Naive thymus-derived CD4-positive, alpha-beta T cell (primary cell): ENCODE measurements at regions of chr7 and their contacts with region 1.

Region 1: GRCh38 chr7:66844552-66845378 is 76.3 kb upstream of the TMEM248 start:
- DNase-seq: peak; percentile 96 to 100 (median 100)
- ATAC-seq: peak; percentile 95
- H3K4me3 ChIP-seq: peak overlapping the region; percentile 99
- H3K4me3 Mint-ChIP-seq: peak overlapping the region; percentile 88 to 100 (median 96)
- H3K27ac ChIP-seq: peak overlapping the region; percentile 90
- H3K27ac Mint-ChIP-seq: peak overlapping the region; percentile 98 to 100 (median 100)
- H3K4me1 ChIP-seq: peaks cover 5 to 11% of the 10 kb centered on the region in 2 donors
- H3K4me1 Mint-ChIP-seq: peaks cover 10 to 29% (median 26%) of the 10 kb centered on the region in 7 donors
- H3K27me3 ChIP-seq: no peaks in the 10 kb centered on the region
- H3K27me3 Mint-ChIP-seq: peaks cover 0 to 3% (median 0%) of the 10 kb centered on the region in 5 donors

Region 2: GRCh38 chr7:65373608-65374351 is 1471.0 kb before region 1 on chr7 and contains the start of gene ZNF92:
- CTCF ChIA-PET with region 1: no interaction called
- POLR2A ChIA-PET with region 1: no interaction called
- intact Hi-C with region 1: loop called in 1 of 2 experiments (anchors 10 kb)
- DNase-seq: peak; percentile 84 to 95 (median 94)
- ATAC-seq: peak; percentile 99
- H3K4me3 ChIP-seq: peak within 1 kb of the TSS; percentile 87
- H3K4me3 Mint-ChIP-seq: peak within 1 kb of the TSS; percentile 90 to 98 (median 96)
- H3K27ac ChIP-seq: peak within 1 kb of the TSS; percentile 82
- H3K27ac Mint-ChIP-seq: peak within 1 kb of the TSS; percentile 87 to 96 (median 93)
- H3K4me1 ChIP-seq: peaks cover 8 to 21% of the 10 kb centered on the region in 2 donors
- H3K4me1 Mint-ChIP-seq: peaks cover 18 to 57% (median 49%) of the 10 kb centered on the region in 7 donors
- H3K27me3 ChIP-seq: no peaks in the 10 kb centered on the region
- H3K27me3 Mint-ChIP-seq: no peaks in the 10 kb centered on the region
- total RNA-seq, gene ZNF92: 16.3 to 22.5 (median 19.3) TPM

Region 3: GRCh38 chr7:66114793-66115649 is 729.7 kb before region 1 on chr7 and contains the start of gene CRCP:
- CTCF ChIA-PET with region 1: no interaction called
- POLR2A ChIA-PET with region 1: no interaction called
- intact Hi-C with region 1: loop called in 1 of 2 experiments (anchors 10 kb)
- DNase-seq: peak; percentile 78 to 87 (median 83)
- ATAC-seq: peak; percentile 94
- H3K4me3 ChIP-seq: peak within 1 kb of the TSS; percentile 87
- H3K4me3 Mint-ChIP-seq: peak within 1 kb of the TSS; percentile 94 to 98 (median 96)
- H3K27ac ChIP-seq: peak within 1 kb of the TSS; percentile 95
- H3K27ac Mint-ChIP-seq: peak within 1 kb of the TSS; percentile 94 to 98 (median 96)
- H3K4me1 ChIP-seq: peaks cover 14 to 26% of the 10 kb centered on the region in 2 donors
- H3K4me1 Mint-ChIP-seq: peaks cover 28 to 56% (median 47%) of the 10 kb centered on the region in 7 donors
- H3K27me3 ChIP-seq: no peaks in the 10 kb centered on the region
- H3K27me3 Mint-ChIP-seq: no peaks in the 10 kb centered on the region
- total RNA-seq, gene CRCP: 29.8 to 37.9 (median 34.0) TPM

Region 4: DNA sequence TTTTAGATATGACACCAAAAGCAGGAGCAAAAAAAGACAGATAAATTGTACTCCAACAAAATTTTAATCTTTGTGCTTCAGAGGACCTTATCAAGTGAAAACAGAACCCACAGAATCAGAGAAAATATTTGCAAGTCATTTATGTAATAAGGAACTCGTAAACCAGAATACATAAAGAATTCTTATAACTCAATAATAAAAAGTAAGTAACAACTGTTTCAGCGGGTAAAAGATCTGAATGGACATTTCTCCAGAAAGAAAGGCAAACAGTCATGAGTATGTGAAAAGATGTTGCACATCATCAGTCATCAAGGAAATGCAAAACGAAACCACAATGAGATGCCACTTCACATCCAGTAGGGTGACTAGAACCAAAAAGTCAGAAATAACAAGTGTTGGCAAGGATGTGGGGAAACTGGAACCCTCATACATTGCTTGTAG is 383.8 kb before region 1 on chr7:
- CTCF ChIA-PET with region 1: no interaction called
- POLR2A ChIA-PET with region 1: no interaction called
- intact Hi-C with region 1: no loop called
- DNase-seq: no peak
- ATAC-seq: no peak
- H3K4me3 ChIP-seq: no peak overlapping the region
- H3K4me3 Mint-ChIP-seq: no peak overlapping the region
- H3K27ac ChIP-seq: no peak overlapping the region
- H3K27ac Mint-ChIP-seq: no peak overlapping the region
- H3K4me1 ChIP-seq: no peaks in the 10 kb centered on the region
- H3K4me1 Mint-ChIP-seq: peaks cover 0 to 22% (median 10%) of the 10 kb centered on the region in 7 donors
- H3K27me3 ChIP-seq: no peaks in the 10 kb centered on the region
- H3K27me3 Mint-ChIP-seq: no peaks in the 10 kb centered on the region

Region 5: GRCh38 chr7:66591799-66592596 is 252.8 kb before region 1 on chr7:
- CTCF ChIA-PET with region 1: no interaction called
- POLR2A ChIA-PET with region 1: no interaction called
- intact Hi-C with region 1: loop called (anchors 1 kb)
- DNase-seq: peak; percentile 65 to 90 (median 88)
- ATAC-seq: peak; percentile 98
- H3K4me3 ChIP-seq: peak overlapping the region; percentile 88
- H3K4me3 Mint-ChIP-seq: peak overlapping the region; percentile 95 to 99 (median 98)
- H3K27ac ChIP-seq: peak overlapping the region; percentile 82
- H3K27ac Mint-ChIP-seq: peak overlapping the region; percentile 88 to 99 (median 97)
- H3K4me1 ChIP-seq: peaks cover 8 to 16% of the 10 kb centered on the region in 2 donors
- H3K4me1 Mint-ChIP-seq: peaks cover 33 to 69% (median 53%) of the 10 kb centered on the region in 7 donors
- H3K27me3 ChIP-seq: no peaks in the 10 kb centered on the region
- H3K27me3 Mint-ChIP-seq: no peaks in the 10 kb centered on the region

Region 6: GRCh38 chr7:66654123-66654732 is 190.5 kb before region 1 on chr7:
- CTCF ChIA-PET with region 1: no interaction called
- POLR2A ChIA-PET with region 1: interaction called, 4 read pairs
- intact Hi-C with region 1: loop called (anchors 1 kb)
- DNase-seq: peak; percentile 96 to 99 (median 97)
- ATAC-seq: peak; percentile 95
- H3K4me3 ChIP-seq: peak overlapping the region; percentile 94
- H3K4me3 Mint-ChIP-seq: peak overlapping the region; percentile 91 to 99 (median 98)
- H3K27ac ChIP-seq: peak overlapping the region; percentile 99
- H3K27ac Mint-ChIP-seq: peak overlapping the region; percentile 94 to 99 (median 98)
- H3K4me1 ChIP-seq: peaks cover 8% of the 10 kb centered on the region in 2 donors
- H3K4me1 Mint-ChIP-seq: peaks cover 17 to 56% (median 39%) of the 10 kb centered on the region in 7 donors
- H3K27me3 ChIP-seq: no peaks in the 10 kb centered on the region
- H3K27me3 Mint-ChIP-seq: no peaks in the 10 kb centered on the region

Region 7: DNA sequence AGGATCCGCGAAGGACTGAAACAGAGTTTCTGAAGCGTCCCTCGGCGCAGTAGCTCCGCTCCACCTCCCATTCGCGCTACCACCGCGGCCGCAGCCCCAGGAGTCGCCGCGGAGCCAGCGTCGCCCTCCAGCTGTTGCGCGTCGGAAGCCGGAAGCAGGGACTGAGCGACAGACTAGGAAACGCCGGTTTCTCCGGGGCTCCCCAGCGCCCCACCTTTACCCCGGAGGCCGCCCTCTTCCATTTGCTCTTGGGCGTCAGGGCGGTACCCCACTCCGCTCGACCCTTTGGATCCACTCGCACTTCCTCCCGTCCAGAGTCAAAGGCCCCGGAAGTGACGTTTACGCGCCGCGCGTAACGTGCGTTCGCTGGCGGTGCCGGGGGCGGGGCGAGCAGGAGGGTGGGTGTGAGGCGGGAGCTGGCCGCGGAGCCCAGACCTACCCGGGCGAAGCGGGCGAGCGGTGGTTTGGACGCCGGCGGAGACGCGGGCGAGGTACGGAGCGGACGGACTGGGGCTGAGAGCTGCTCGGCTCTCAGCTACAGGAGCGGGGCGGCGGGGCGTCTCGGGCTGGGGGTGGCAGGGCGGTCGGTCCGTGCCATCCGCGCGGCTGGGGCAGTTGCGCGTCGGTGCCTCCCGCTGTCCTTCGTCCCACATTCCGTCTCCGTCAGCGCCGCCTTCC is 104.3 kb before region 1 on chr7 and contains the start of gene RABGEF1:
- CTCF ChIA-PET with region 1: no interaction called
- POLR2A ChIA-PET with region 1: interaction called, 6 read pairs
- intact Hi-C with region 1: loop called (anchors 1 kb)
- DNase-seq: peak; percentile 94 to 98 (median 95)
- ATAC-seq: peak; percentile 95
- H3K4me3 ChIP-seq: peak within 1 kb of the TSS; percentile 82
- H3K4me3 Mint-ChIP-seq: peak within 1 kb of the TSS; percentile 89 to 98 (median 94)
- H3K27ac ChIP-seq: peak within 1 kb of the TSS; percentile 84
- H3K27ac Mint-ChIP-seq: peak within 1 kb of the TSS; percentile 94 to 98 (median 96)
- H3K4me1 ChIP-seq: peaks cover 0 to 6% of the 10 kb centered on the region in 2 donors
- H3K4me1 Mint-ChIP-seq: peaks cover 30 to 74% (median 54%) of the 10 kb centered on the region in 7 donors
- H3K27me3 ChIP-seq: no peaks in the 10 kb centered on the region
- H3K27me3 Mint-ChIP-seq: no peaks in the 10 kb centered on the region
- total RNA-seq, gene RABGEF1: 20.7 to 35.7 (median 22.2) TPM

Region 8: DNA sequence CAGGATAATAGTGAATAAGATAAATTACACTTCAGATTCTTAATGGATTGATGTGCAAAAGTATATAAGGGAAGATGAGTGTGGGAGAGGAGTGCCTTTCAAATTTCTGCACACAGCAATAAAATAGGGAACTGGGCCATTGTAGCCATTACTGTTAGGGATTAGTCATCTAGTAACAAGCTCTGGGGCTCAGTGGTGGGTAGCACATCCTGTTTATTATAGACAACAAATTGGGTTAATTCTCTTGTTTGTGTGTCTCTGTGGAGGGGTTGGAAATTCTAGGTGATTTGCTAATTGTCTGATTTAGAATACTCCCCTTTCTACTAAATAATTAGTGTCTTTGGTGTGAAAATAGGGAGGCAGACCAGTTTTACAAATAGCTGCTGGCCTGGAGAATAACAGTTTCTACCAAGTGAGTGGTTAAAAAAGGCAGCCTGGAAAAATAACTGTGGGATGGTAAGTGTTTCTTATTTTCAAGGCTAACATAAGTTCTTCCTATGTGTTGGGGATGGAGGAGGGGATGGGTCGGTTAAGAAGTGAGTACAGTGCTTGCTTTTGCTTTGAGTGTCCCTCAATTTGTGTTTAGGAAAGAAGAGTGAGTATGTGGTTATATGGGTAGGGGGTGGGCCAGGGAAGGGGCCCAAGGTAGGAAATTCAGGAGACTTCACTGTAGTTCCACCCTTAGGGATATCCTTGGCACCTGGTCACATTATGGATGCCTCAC is 33.0 kb after region 1 on chr7:
- CTCF ChIA-PET with region 1: no interaction called
- POLR2A ChIA-PET with region 1: no interaction called
- intact Hi-C with region 1: no loop called
- DNase-seq: no peak
- ATAC-seq: no peak
- H3K4me3 ChIP-seq: no peak overlapping the region
- H3K4me3 Mint-ChIP-seq: no peak overlapping the region
- H3K27ac ChIP-seq: no peak overlapping the region
- H3K27ac Mint-ChIP-seq: no peak overlapping the region
- H3K4me1 ChIP-seq: no peaks in the 10 kb centered on the region
- H3K4me1 Mint-ChIP-seq: peaks cover 0 to 13% (median 0%) of the 10 kb centered on the region in 7 donors
- H3K27me3 ChIP-seq: no peaks in the 10 kb centered on the region
- H3K27me3 Mint-ChIP-seq: no peaks in the 10 kb centered on the region

Region 9: DNA sequence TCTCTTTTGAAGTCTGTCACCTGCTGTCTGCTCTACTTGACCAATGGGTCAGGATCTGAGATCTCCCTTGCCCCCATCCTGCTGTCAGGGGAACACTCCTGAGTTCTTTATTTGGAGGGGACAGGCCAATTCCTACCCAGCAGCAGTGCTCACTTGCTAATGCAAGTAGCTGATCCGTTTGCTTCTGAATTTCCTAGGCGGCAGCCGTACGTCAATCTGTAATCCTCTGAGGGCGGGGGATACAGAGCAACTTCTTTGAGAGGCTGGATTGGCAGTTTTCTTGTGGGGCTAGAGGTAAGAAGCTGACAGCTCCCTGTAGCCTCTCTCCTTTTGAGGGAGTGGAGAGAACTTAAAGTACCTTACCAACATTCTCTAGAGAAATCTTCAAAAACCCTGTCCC is 188.5 kb after region 1 on chr7:
- CTCF ChIA-PET with region 1: no interaction called
- POLR2A ChIA-PET with region 1: no interaction called
- intact Hi-C with region 1: no loop called
- DNase-seq: no peak
- ATAC-seq: no peak
- H3K4me3 ChIP-seq: no peak overlapping the region
- H3K4me3 Mint-ChIP-seq: no peak overlapping the region
- H3K27ac ChIP-seq: no peak overlapping the region
- H3K27ac Mint-ChIP-seq: no peak overlapping the region
- H3K4me1 ChIP-seq: no peaks in the 10 kb centered on the region
- H3K4me1 Mint-ChIP-seq: no peaks in the 10 kb centered on the region
- H3K27me3 ChIP-seq: no peaks in the 10 kb centered on the region
- H3K27me3 Mint-ChIP-seq: no peaks in the 10 kb centered on the region